CD8-positive, alpha-beta T cell (primary cell): ENCODE measurements at regions of chr1 and their contacts with region 1.

Region 1: DNA sequence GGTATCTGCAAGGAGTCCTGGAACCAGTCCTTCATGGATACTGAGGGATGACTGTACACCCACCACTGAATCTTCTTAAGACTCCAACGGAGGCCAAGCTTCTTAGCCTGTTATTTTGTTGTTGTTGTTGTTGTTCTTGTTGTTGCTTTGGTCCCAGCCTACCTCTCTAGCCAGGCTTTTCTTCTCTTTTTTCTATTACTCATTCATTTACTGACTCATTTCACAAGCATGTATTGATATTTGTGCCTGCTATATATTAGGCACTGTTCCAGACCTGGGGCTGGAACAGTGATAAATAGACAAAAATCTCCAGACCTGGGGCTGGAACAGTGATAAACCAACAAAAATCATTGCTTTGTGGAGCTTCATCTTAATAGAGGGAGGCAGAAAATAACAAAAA is 20.4 kb downstream of the CENPF start:
- DNase-seq: no peak
- ATAC-seq: no peak
- H3K4me3 ChIP-seq: no peak overlapping the region
- H3K4me3 Mint-ChIP-seq: no peak overlapping the region
- H3K27ac ChIP-seq: no peak overlapping the region
- H3K27ac Mint-ChIP-seq: no peak overlapping the region
- H3K4me1 ChIP-seq: no peaks in the 10 kb centered on the region
- H3K4me1 Mint-ChIP-seq: peaks cover 3% of the 10 kb centered on the region
- H3K27me3 ChIP-seq: no peaks in the 10 kb centered on the region
- H3K27me3 Mint-ChIP-seq: no peaks in the 10 kb centered on the region
- CTCF ChIP-seq: no peak

Region 2: GRCh38 chr1:214494706-214495105 is 128.7 kb before region 1 on chr1:
- CTCF ChIA-PET with region 1: no interaction called
- POLR2A ChIA-PET with region 1: no interaction called
- intact Hi-C with region 1: no loop called
- DNase-seq: no peak
- ATAC-seq: no peak
- H3K4me3 ChIP-seq: no peak overlapping the region
- H3K4me3 Mint-ChIP-seq: no peak overlapping the region
- H3K27ac ChIP-seq: no peak overlapping the region
- H3K27ac Mint-ChIP-seq: no peak overlapping the region
- H3K4me1 ChIP-seq: no peaks in the 10 kb centered on the region
- H3K4me1 Mint-ChIP-seq: no peaks in the 10 kb centered on the region
- H3K27me3 ChIP-seq: peaks cover 0 to 3% of the 10 kb centered on the region in 2 experiments
- H3K27me3 Mint-ChIP-seq: peaks cover 10% of the 10 kb centered on the region
- CTCF ChIP-seq: no peak

Region 3: GRCh38 chr1:214557952-214558735 is 65.3 kb before region 1 on chr1:
- CTCF ChIA-PET with region 1: no interaction called
- POLR2A ChIA-PET with region 1: no interaction called
- intact Hi-C with region 1: no loop called
- DNase-seq: no peak
- ATAC-seq: no peak
- H3K4me3 ChIP-seq: no peak overlapping the region
- H3K4me3 Mint-ChIP-seq: no peak overlapping the region
- H3K27ac ChIP-seq: no peak overlapping the region
- H3K27ac Mint-ChIP-seq: no peak overlapping the region
- H3K4me1 ChIP-seq: no peaks in the 10 kb centered on the region
- H3K4me1 Mint-ChIP-seq: no peaks in the 10 kb centered on the region
- H3K27me3 ChIP-seq: peaks cover 0 to 3% of the 10 kb centered on the region in 2 experiments
- H3K27me3 Mint-ChIP-seq: peaks cover 35% of the 10 kb centered on the region
- CTCF ChIP-seq: no peak

Region 4: GRCh38 chr1:214670098-214670497 is 46.7 kb after region 1 on chr1:
- CTCF ChIA-PET with region 1: no interaction called
- POLR2A ChIA-PET with region 1: no interaction called
- intact Hi-C with region 1: no loop called
- DNase-seq: no peak
- ATAC-seq: no peak
- H3K4me3 ChIP-seq: no peak overlapping the region
- H3K4me3 Mint-ChIP-seq: no peak overlapping the region
- H3K27ac ChIP-seq: no peak overlapping the region
- H3K27ac Mint-ChIP-seq: no peak overlapping the region
- H3K4me1 ChIP-seq: no peaks in the 10 kb centered on the region
- H3K4me1 Mint-ChIP-seq: no peaks in the 10 kb centered on the region
- H3K27me3 ChIP-seq: no peaks in the 10 kb centered on the region
- H3K27me3 Mint-ChIP-seq: no peaks in the 10 kb centered on the region
- CTCF ChIP-seq: no peak

Region 5: GRCh38 chr1:215076318-215076717 is 452.9 kb after region 1 on chr1:
- CTCF ChIA-PET with region 1: no interaction called
- POLR2A ChIA-PET with region 1: no interaction called
- intact Hi-C with region 1: loop called in 1 of 2 experiments (anchors 10 kb)
- DNase-seq: peak in 1 of 9 experiments; percentile 3
- ATAC-seq: no peak
- H3K4me3 ChIP-seq: no peak overlapping the region
- H3K4me3 Mint-ChIP-seq: no peak overlapping the region
- H3K27ac ChIP-seq: no peak overlapping the region
- H3K27ac Mint-ChIP-seq: no peak overlapping the region
- H3K4me1 ChIP-seq: no peaks in the 10 kb centered on the region
- H3K4me1 Mint-ChIP-seq: no peaks in the 10 kb centered on the region
- H3K27me3 ChIP-seq: peaks cover 0 to under 1% of the 10 kb centered on the region in 2 experiments
- H3K27me3 Mint-ChIP-seq: peaks cover 19% of the 10 kb centered on the region
- CTCF ChIP-seq: no peak

Region 6: GRCh38 chr1:215146341-215146826 is 523.0 kb after region 1 on chr1:
- CTCF ChIA-PET with region 1: no interaction called
- POLR2A ChIA-PET with region 1: no interaction called
- intact Hi-C with region 1: loop called (anchors 2 to 10 kb)
- DNase-seq: no peak
- ATAC-seq: no peak
- H3K4me3 ChIP-seq: no peak overlapping the region
- H3K4me3 Mint-ChIP-seq: no peak overlapping the region
- H3K27ac ChIP-seq: no peak overlapping the region
- H3K27ac Mint-ChIP-seq: no peak overlapping the region
- H3K4me1 ChIP-seq: no peaks in the 10 kb centered on the region
- H3K4me1 Mint-ChIP-seq: no peaks in the 10 kb centered on the region
- H3K27me3 ChIP-seq: no peaks in the 10 kb centered on the region
- H3K27me3 Mint-ChIP-seq: no peaks in the 10 kb centered on the region
- CTCF ChIP-seq: no peak